ENCODE measurements at regions of chr9 and their contacts with region 1.

Region 1: DNA sequence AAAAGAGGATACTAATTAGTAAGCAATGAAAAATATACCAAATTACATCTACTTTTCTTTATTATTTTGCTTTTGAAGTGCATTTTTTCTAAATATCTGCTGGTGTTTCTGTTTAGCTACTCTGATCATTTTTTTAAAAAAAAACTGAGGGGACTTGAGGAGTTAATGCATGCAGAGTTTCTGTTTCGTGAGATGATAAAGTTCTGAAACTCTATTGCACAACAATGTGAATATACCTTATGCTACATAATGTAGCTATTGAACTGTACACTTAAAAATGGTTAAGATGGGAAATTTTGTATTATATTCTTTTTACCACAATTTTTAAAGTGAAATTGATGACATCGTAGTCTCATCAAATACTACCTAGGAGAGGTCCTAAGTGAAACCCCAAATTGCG is 288.3 kb upstream of the NR4A3 start:
- DNase-seq: no peak
- ATAC-seq: peak; percentile 63
- H3K4me3 ChIP-seq: no peak overlapping the region
- H3K27ac ChIP-seq: no peak overlapping the region
- H3K4me1 ChIP-seq: no peaks in the 10 kb centered on the region
- H3K27me3 ChIP-seq: no peaks in the 10 kb centered on the region
- CTCF ChIP-seq: no peak
- EP300 ChIP-seq: no peak
- POLR2A ChIP-seq: no peak
- RAD21 ChIP-seq: no peak

Region 2: DNA sequence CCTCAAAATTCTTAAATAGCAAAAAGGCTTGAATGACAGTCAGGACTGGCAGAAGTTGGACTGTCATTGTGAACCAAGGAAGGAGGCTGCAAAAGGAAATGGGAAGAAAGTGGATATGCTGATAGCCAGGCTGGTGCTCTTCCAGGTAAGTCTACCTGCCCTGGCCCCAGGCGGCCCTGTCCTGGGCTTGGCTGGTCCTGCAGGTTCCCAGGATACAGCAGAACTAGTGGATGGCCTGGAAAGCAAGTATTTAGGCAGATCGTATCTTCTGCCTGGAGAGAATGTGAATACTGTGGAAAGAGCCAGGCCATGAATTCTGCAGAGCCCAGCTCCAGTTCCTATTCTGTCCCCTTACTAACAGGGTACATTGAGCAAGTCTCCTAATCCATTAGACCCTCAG is 162.1 kb before region 1 on chr9:
- CTCF ChIA-PET with region 1: no interaction called
- POLR2A ChIA-PET with region 1: no interaction called
- RAD21 ChIA-PET with region 1: no interaction called
- SMC1A ChIA-PET with region 1: no interaction called
- in situ Hi-C with region 1: no loop called
- intact Hi-C with region 1: no loop called
- DNase-seq: no peak
- ATAC-seq: no peak
- H3K4me3 ChIP-seq: no peak overlapping the region
- H3K27ac ChIP-seq: no peak overlapping the region
- H3K4me1 ChIP-seq: peaks cover 20% of the 10 kb centered on the region
- H3K27me3 ChIP-seq: no peaks in the 10 kb centered on the region; a peak in 1 of 4 replicates
- CTCF ChIP-seq: no peak
- EP300 ChIP-seq: no peak
- POLR2A ChIP-seq: no peak
- RAD21 ChIP-seq: no peak

Region 3: GRCh38 chr9:99445371-99445891 is 88.0 kb before region 1 on chr9:
- CTCF ChIA-PET with region 1: no interaction called
- POLR2A ChIA-PET with region 1: no interaction called
- RAD21 ChIA-PET with region 1: no interaction called
- SMC1A ChIA-PET with region 1: no interaction called
- in situ Hi-C with region 1: no loop called
- intact Hi-C with region 1: no loop called
- DNase-seq: no peak
- ATAC-seq: no peak
- H3K4me3 ChIP-seq: no peak overlapping the region
- H3K27ac ChIP-seq: no peak overlapping the region
- H3K4me1 ChIP-seq: no peaks in the 10 kb centered on the region
- H3K27me3 ChIP-seq: no peaks in the 10 kb centered on the region
- CTCF ChIP-seq: no peak
- EP300 ChIP-seq: no peak
- POLR2A ChIP-seq: no peak
- RAD21 ChIP-seq: no peak

Region 4: DNA sequence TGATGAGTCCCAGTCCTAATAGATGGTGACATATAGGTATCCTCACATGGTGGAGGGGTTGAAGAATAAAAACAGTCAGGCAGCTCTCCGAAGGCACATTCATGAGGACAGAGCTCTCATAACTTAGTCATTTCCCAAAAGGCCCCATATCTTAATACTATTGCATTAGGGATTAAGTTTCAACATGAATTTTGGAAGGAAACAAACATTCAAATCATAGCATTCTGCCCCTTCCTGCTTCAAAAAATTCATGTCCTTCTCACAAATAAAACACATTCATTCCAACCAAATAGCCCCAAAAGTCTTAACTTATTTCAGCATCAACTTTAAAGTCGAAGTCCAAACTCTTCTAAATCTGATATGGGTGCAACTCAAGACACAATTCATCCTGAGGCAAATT is 11.1 kb after region 1 on chr9:
- CTCF ChIA-PET with region 1: interaction called, 3 read pairs
- POLR2A ChIA-PET with region 1: interaction called, 3 read pairs
- RAD21 ChIA-PET with region 1: interaction called, 3 read pairs
- SMC1A ChIA-PET with region 1: interaction called, 18 read pairs
- in situ Hi-C with region 1: no loop called
- intact Hi-C with region 1: no loop called
- DNase-seq: no peak
- ATAC-seq: no peak
- H3K4me3 ChIP-seq: no peak overlapping the region
- H3K27ac ChIP-seq: no peak overlapping the region
- H3K4me1 ChIP-seq: no peaks in the 10 kb centered on the region
- H3K27me3 ChIP-seq: no peaks in the 10 kb centered on the region
- CTCF ChIP-seq: no peak
- EP300 ChIP-seq: no peak
- POLR2A ChIP-seq: no peak
- RAD21 ChIP-seq: no peak